AG04450 (cell line): ENCODE measurements at regions of chr15 and their contacts with region 1.

Region 1: DNA sequence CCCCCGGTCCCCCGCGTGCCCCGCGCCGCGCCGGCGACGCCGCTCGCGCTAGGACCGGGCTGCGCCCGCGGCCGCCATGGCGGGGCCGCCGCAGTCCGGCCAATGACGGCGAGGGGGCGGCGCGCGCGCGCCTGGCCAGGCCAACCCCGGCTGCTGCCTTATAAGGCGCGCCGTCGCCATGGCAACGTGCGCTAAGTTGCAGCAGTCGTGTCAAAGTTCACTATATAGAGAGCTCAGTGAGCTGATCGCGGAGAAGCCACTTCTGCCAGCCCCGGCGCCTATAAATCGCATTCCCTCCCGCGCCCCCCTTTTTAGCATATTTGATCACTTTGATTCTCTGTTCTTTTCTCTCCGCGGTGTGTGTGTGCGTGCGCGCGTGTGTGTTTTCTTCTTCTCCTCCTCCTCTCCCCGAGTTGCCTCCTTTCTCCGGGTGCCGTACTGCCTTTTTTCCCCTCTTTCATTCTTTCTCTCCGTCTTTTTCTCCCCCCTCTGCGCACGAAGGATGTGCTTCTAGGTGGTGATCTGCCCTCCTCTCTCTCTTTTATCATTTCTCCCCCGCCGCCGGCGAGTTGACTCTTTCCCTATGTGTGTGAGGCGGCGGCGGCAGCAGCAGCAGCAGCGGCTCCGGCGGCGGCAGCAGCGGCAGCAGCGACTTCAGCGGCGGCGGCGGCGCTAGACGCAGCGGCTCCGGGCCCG is at the start of gene NR2F2:
- DNase-seq: peak; percentile 99
- H3K4me3 ChIP-seq: peak within 1 kb of the TSS; percentile 85
- H3K27ac ChIP-seq: peak within 1 kb of the TSS; percentile 98
- H3K27me3 ChIP-seq: no peaks in the 10 kb centered on the region
- CTCF ChIP-seq: no peak
- polyA plus RNA-seq, gene NR2F2: 63.1 and 66.9 TPM in 2 replicates

Region 2: GRCh38 chr15:95025924-95026728 is 1304.5 kb before region 1 on chr15:
- CTCF ChIA-PET with region 1: interaction called, 36 read pairs
- POLR2A ChIA-PET with region 1: no interaction called
- DNase-seq: peak; percentile 33
- H3K4me3 ChIP-seq: no peak overlapping the region
- H3K27ac ChIP-seq: no peak overlapping the region
- H3K27me3 ChIP-seq: no peaks in the 10 kb centered on the region
- CTCF ChIP-seq: peak; percentile 85

Region 3: DNA sequence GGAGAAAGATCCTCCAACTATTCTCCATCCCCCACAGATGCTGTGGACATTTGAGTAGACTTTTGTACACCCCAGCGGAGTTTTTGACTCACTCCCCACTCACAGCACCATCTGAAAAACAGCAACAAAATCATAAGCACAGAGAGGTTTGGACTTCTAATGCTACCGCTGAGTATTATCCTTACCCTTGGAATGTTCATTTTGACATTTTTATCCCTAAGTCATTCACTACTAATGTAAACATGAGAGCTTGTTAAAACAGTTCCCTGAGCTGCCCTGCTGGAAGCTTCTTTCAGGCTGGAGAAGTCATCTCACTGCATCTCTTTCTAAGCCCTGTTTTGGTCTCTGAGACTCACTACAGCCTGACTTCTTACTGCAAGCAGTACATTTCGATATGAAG is 1053.3 kb before region 1 on chr15:
- CTCF ChIA-PET with region 1: interaction called, 7 read pairs
- POLR2A ChIA-PET with region 1: interaction called, 12 read pairs
- DNase-seq: peak; percentile 91
- H3K4me3 ChIP-seq: no peak overlapping the region
- H3K27ac ChIP-seq: peak overlapping the region; percentile 22
- H3K27me3 ChIP-seq: no peaks in the 10 kb centered on the region
- CTCF ChIP-seq: no peak

Region 4: DNA sequence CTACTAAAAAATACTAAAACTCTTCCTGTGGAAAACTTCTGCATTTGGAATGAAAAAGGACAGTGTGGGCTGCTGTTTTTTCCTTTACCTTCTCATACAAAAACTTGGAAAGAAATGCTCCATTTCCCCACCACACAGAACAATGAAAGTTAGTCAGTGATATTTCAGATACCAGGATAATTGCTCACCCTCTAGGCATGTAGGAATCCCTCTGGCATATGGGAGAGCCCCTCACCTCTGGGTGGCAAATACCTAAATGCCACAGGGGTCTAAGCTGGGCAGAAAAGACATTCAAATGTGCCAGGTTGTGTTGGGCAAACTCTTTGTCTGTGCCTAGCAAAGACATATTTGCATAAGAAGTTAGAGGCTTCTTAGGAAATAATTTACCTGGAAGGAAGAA is 560.4 kb before region 1 on chr15:
- CTCF ChIA-PET with region 1: no interaction called
- POLR2A ChIA-PET with region 1: no interaction called
- DNase-seq: no peak
- H3K4me3 ChIP-seq: no peak overlapping the region
- H3K27ac ChIP-seq: no peak overlapping the region
- H3K27me3 ChIP-seq: no peaks in the 10 kb centered on the region
- CTCF ChIP-seq: no peak

Region 5: GRCh38 chr15:96047255-96047931 is 283.2 kb before region 1 on chr15:
- CTCF ChIA-PET with region 1: interaction called, 18 read pairs
- POLR2A ChIA-PET with region 1: interaction called, 3 read pairs
- DNase-seq: peak; percentile 76
- H3K4me3 ChIP-seq: peak overlapping the region; percentile 34
- H3K27ac ChIP-seq: peak overlapping the region; percentile 90
- H3K27me3 ChIP-seq: no peaks in the 10 kb centered on the region
- CTCF ChIP-seq: peak; percentile 25

Region 6: GRCh38 chr15:96345560-96346399 is 15.2 kb after region 1 on chr15:
- CTCF ChIA-PET with region 1: interaction called, 24 read pairs
- POLR2A ChIA-PET with region 1: interaction called, 38 read pairs
- DNase-seq: no peak
- H3K4me3 ChIP-seq: peak overlapping the region; percentile 75
- H3K27ac ChIP-seq: peak overlapping the region; percentile 88
- H3K27me3 ChIP-seq: no peaks in the 10 kb centered on the region
- CTCF ChIP-seq: peak; percentile 41; the same call in 1 of the 2 replicates

Region 7: DNA sequence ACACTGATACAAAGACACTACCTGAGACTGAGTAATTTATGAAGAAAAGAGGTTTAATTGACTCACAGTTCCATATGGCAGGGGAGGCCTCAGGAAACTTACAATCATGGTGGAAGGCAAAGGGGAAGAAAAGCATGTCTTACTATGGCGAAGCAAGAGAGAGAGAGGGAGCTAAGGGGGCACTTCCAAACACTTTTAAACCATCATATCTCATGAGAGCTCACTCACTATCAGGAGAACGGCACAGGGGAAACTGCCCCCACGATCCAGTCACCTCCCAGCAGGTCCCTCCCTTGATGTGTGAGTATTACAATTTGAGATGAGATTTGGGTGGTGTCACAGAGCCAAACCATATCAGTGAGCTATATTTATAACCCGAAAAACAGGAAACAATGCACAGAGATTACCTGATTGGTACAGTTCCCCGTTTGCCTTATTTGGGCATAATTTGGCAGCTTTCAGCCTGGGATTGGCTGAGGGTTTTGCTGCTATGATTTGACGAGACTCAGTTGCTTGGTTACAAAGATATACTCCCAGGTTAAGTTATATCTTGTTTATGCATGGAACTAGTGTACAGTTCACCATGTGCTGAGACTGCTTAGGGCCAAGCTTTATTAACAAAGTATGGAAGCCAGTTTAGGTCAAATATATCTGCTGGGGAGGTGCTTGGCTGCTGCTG is 184.1 kb after region 1 on chr15:
- CTCF ChIA-PET with region 1: no interaction called
- POLR2A ChIA-PET with region 1: no interaction called
- DNase-seq: no peak
- H3K4me3 ChIP-seq: no peak overlapping the region
- H3K27ac ChIP-seq: no peak overlapping the region
- H3K27me3 ChIP-seq: no peaks in the 10 kb centered on the region
- CTCF ChIP-seq: no peak

Region 8: DNA sequence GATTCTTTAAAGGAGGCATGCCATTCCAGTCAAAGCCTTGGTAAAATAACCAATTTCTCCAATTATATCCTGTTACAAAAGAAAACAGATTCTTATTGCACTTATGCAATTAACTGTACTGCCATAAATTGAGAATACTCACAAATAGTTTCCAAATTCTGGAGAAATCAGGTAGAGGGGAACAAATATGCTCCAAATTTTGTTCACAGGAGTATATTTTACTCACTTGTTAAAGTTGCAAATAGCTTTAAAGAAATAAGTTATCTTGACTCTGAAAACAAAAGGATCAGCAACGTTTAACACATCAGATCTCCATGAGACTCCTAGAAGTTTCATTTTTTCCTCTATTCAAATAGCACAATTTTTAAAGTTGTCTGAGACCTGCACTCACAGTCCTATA is 917.8 kb after region 1 on chr15:
- CTCF ChIA-PET with region 1: interaction called, 11 read pairs
- POLR2A ChIA-PET with region 1: no interaction called
- DNase-seq: no peak
- H3K4me3 ChIP-seq: no peak overlapping the region
- H3K27ac ChIP-seq: no peak overlapping the region
- H3K27me3 ChIP-seq: no peaks in the 10 kb centered on the region
- CTCF ChIP-seq: no peak